PC-9 (cell line): ENCODE measurements at regions of chr2 and their contacts with region 1.

Region 1: DNA sequence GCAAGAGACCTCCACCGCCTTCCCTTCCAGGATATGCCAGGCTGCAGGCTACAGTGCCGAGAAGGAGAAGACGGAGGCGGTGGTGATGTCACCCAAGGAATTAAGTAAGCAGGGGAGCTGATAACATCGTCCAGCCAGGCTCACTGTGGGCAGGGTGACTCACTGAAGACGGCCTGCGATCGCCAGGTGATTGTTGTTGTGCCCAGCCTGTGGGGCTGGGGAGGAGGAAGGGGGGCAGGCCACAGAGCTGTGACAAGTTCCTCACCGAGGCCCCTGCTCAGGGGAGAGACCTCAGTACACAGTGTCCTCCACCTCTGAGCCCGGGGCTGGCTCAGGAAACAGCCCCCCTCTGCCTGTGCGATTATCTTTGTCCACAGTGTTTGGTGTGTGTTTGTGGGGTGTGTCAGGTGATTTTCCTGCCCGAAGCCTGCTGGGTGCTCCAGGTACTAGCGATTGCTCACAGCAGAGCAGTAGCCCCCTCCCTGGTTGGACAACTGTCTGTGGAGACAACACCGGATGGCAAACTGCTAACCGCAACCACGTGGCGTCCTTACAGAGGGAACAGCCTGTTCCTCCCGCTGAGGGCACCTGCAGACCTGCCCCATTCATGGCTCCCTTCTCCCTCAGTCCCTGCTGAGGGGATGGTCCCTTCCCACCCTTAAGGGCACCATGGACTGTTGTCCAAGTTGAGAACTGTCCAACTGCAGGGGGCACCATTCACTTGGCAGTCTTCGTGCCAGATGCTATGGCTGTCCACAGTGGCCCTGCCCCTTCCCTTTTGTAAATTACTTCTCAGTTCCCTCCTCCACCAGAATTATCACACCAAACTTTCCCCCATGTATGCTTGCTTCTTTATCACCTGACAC is 95.1 kb downstream of the ZFP36L2 start:
- DNase-seq: peak; percentile 94 to 97
- H3K4me3 ChIP-seq: peak overlapping the region; percentile 22; the same call in 1 of the 2 replicates
- H3K27ac ChIP-seq: peak overlapping the region; percentile 66
- H3K4me1 ChIP-seq: peaks cover 55% of the 10 kb centered on the region
- H3K27me3 ChIP-seq: no peaks in the 10 kb centered on the region
- CTCF ChIP-seq: peak; percentile 88

Region 2: GRCh38 chr2:42828487-42829425 is 302.5 kb before region 1 on chr2:
- CTCF ChIA-PET with region 1: interaction called, 3 read pairs
- POLR2A ChIA-PET with region 1: no interaction called
- intact Hi-C with region 1: loop called (anchors 1 kb)
- DNase-seq: peak; percentile 60 to 75
- H3K4me3 ChIP-seq: no peak overlapping the region
- H3K27ac ChIP-seq: no peak overlapping the region
- H3K4me1 ChIP-seq: 0 out of 2 replicates have a peak, but pooled peaks cover 7% of the 10 kb centered on the region
- H3K27me3 ChIP-seq: no peaks in the 10 kb centered on the region
- CTCF ChIP-seq: peak; percentile 99

Region 3: DNA sequence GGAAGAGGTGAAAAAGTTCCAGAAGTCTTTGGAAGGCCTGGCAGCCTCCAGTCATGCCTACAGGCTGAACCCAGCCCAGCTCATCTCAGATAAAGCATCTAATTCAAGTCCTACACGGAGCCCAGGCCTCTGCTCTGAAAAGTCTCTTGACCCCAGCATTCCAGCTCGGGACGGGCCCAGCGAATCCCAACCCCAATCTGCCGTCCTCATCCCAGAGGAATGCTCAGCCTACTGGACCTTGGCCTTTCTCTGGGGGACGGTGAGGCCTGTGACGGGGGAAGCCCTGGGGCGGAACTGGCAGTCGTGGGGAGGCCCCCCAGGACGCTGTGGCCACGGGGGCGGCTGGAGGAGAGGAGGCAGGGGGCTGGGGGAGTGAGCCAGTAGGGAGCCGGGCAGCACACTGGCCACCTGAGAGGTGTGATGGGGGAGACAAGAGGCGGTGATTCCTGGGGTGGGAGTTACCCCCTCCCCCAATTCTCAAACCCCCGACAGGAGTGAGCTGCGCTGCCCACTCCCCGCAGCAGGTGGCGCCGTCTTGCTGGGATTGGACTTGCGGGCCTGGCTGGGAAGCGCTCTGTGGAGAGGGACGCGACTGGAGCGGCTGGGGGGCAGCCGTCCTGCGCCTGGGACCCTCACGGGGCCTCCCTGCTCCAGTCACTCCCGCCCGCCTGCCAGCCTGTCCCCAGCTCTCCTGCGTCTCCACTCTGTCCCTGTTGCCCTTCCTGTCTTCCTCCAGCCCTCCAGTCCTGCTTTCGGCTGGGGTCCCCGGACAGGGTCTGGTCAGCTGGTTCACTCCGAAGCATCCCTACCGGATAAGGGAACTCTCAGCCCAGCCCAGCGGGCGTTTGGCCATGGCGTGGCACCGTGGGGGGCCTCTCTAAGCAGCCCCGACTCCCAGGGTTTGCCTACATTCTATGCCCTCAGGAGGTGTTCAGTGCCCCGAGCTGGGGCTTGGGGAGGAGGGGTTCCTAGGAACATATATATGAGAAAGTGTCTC is 156.2 kb before region 1 on chr2:
- CTCF ChIA-PET with region 1: interaction called, 4 read pairs
- POLR2A ChIA-PET with region 1: interaction called, 3 read pairs
- intact Hi-C with region 1: loop called (anchors 1 kb)
- DNase-seq: peak in 1 of 2 experiments; percentile 76
- H3K4me3 ChIP-seq: no peak overlapping the region
- H3K27ac ChIP-seq: no peak overlapping the region
- H3K4me1 ChIP-seq: peaks cover 16% of the 10 kb centered on the region
- H3K27me3 ChIP-seq: no peaks in the 10 kb centered on the region
- CTCF ChIP-seq: peak; percentile 97

Region 4: GRCh38 chr2:43075054-43075593 is 56.1 kb before region 1 on chr2:
- CTCF ChIA-PET with region 1: no interaction called
- POLR2A ChIA-PET with region 1: interaction called, 3 read pairs
- intact Hi-C with region 1: loop called (anchors 1 kb)
- DNase-seq: peak; percentile 89 to 97
- H3K4me3 ChIP-seq: peak overlapping the region; percentile 55
- H3K27ac ChIP-seq: peak overlapping the region; percentile 93
- H3K4me1 ChIP-seq: peaks cover 71% of the 10 kb centered on the region
- H3K27me3 ChIP-seq: no peaks in the 10 kb centered on the region
- CTCF ChIP-seq: no peak

Region 5: GRCh38 chr2:43169987-43170386 is 38.7 kb after region 1 on chr2:
- CTCF ChIA-PET with region 1: no interaction called
- POLR2A ChIA-PET with region 1: no interaction called
- intact Hi-C with region 1: loop called (anchors 1 kb)
- DNase-seq: peak; percentile 38 to 50
- H3K4me3 ChIP-seq: peak overlapping the region; percentile 53; the same call in 1 of the 2 replicates
- H3K27ac ChIP-seq: peak overlapping the region; percentile 97
- H3K4me1 ChIP-seq: peaks cover 74% of the 10 kb centered on the region
- H3K27me3 ChIP-seq: no peaks in the 10 kb centered on the region
- CTCF ChIP-seq: peak; percentile 96

Region 6: DNA sequence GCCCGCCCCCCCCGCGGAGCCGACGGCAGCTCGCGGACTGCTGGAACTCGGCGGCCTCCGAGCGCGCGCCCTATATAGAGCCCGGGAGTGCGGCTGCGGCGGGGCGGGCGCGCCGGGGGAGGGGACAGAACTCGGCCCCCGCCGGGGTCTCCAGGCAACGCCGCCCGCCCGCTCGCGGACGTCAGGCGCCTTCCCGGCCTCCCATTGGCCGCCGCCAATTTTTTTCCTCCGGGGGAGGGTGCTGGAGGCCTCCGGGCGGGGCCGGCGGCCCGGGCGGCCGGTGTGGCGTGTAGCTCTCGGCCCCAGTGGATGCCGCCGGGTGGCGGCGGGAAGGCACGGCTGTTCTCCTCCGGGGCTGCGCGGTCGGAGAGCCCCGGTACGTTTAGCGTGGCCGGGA is 95.3 kb after region 1 on chr2 and contains the start of gene ZFP36L2:
- CTCF ChIA-PET with region 1: interaction called, 3 read pairs
- POLR2A ChIA-PET with region 1: interaction called, 3 read pairs
- intact Hi-C with region 1: loop called (anchors 1 kb)
- DNase-seq: peak; percentile 88 to 99
- H3K4me3 ChIP-seq: peak within 1 kb of the TSS; percentile 72
- H3K27ac ChIP-seq: peak within 1 kb of the TSS; percentile 92
- H3K4me1 ChIP-seq: peaks cover 34% of the 10 kb centered on the region
- H3K27me3 ChIP-seq: no peaks in the 10 kb centered on the region
- CTCF ChIP-seq: no peak
- total RNA-seq, gene ZFP36L2: 31.3 and 34.3 TPM in 2 replicates

Region 7: DNA sequence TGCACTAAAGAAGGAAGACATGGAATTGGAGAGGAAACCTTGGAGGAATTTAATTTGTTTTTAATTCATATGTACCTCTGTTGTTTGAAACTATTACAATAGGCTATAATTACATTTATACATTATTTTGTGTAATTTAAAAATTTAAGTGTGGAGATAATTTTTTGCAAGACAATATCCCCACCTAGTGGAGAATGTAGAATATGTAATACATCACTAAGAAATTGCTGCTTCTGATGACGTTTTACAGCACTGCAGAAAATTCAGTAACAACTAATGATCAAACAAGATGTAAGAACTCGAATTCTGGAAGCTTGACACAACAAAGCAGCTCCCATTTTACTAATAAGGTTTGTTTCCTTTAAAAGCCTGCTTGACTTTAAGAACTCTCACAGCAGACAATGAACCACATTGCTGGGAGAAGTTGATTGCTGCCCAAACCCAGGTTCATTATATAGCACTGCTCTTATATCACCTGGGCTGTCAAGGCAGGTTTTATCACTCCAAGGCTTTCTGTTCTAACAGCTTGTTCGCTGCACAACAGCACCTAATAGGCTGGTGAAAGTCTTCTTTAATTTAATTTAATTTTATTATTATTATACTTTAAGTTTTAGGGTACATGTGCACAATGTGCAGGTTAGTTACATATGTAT is 411.2 kb after region 1 on chr2:
- CTCF ChIA-PET with region 1: no interaction called
- POLR2A ChIA-PET with region 1: no interaction called
- intact Hi-C with region 1: loop called (anchors 10 kb)
- DNase-seq: peak in 1 of 2 experiments; percentile 56
- H3K4me3 ChIP-seq: no peak overlapping the region
- H3K27ac ChIP-seq: no peak overlapping the region
- H3K4me1 ChIP-seq: no peaks in the 10 kb centered on the region
- H3K27me3 ChIP-seq: no peaks in the 10 kb centered on the region
- CTCF ChIP-seq: peak; percentile 91